Endothelial cell of umbilical vein (primary cell): ENCODE measurements at regions of chr17 and their contacts with region 1.

Region 1: GRCh38 chr17:1365445-1366039 is 34.5 kb downstream of the YWHAE start:
- DNase-seq: peak; percentile 86
- H3K4me3 ChIP-seq: no peak overlapping the region
- H3K27ac ChIP-seq: no peak overlapping the region
- H3K4me1 ChIP-seq: peaks cover 28% of the 10 kb centered on the region
- H3K27me3 ChIP-seq: no peaks in the 10 kb centered on the region
- CTCF ChIP-seq: peak; percentile 72 to 75
- POLR2A ChIP-seq: no peak

Region 2: GRCh38 chr17:1331708-1332107 is 33.8 kb before region 1 on chr17:
- CTCF ChIA-PET with region 1: interaction called, 12 read pairs
- POLR2A ChIA-PET with region 1: no interaction called
- dilution Hi-C with region 1: no loop called
- intact Hi-C with region 1: no loop called
- DNase-seq: no peak
- H3K4me3 ChIP-seq: no peak overlapping the region
- H3K27ac ChIP-seq: no peak overlapping the region
- H3K4me1 ChIP-seq: no peaks in the 10 kb centered on the region
- H3K27me3 ChIP-seq: no peaks in the 10 kb centered on the region
- CTCF ChIP-seq: no peak
- POLR2A ChIP-seq: no peak

Region 3: DNA sequence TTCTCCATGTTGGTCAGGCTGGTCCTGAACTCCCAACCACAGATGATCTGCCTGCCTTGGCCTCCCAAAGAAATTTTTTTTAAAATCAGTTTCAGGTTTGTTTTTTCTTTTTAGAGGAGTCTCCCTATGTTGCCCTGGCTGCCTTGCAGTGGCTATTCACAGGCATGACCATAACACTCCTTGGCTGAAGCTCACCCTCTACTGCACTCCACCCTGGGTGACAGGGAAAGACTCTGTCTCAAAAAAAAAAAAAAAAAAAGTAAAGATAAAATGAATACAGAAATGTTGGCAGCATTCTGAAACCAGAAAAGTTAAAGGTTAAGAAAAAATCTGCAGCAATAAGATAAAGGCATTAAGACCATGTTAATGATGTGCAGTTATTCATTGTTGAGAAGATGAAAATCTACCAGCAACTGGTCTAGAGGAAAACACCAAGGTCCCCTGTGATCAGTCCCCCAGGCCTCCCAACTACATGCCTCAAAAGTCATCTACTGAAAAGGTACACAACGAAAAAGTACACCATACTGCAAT is 19.4 kb after region 1 on chr17:
- CTCF ChIA-PET with region 1: interaction called, 106 read pairs
- POLR2A ChIA-PET with region 1: no interaction called
- dilution Hi-C with region 1: no loop called
- intact Hi-C with region 1: no loop called
- DNase-seq: no peak
- H3K4me3 ChIP-seq: no peak overlapping the region
- H3K27ac ChIP-seq: no peak overlapping the region
- H3K4me1 ChIP-seq: peaks cover 9% of the 10 kb centered on the region
- H3K27me3 ChIP-seq: no peaks in the 10 kb centered on the region
- CTCF ChIP-seq: no peak
- POLR2A ChIP-seq: no peak

Region 4: DNA sequence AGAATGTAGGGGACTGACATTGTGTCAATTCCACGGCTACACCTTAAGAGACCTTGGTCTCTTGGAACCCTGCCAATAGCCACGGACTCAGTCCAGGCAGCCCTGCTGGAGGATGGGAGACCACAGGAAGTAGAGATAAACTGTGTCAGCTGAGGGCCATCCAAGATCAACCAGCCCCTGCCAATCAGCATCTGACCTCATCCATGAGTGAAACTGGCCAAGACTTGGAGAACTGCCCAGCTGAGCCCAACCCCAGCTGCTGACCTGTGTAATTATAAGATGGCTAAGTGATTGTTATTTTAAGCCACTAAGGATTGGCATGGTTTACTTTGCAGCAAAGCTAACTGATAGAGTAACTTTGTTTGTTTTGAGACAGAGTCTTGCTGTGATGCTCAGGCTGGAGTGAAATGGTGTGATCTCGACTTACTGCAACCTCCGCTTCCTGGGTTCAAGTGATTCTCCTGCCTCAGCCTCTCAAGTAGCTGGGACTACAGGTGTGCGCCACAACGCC is 47.8 kb after region 1 on chr17:
- CTCF ChIA-PET with region 1: interaction called, 28 read pairs
- POLR2A ChIA-PET with region 1: interaction called, 6 read pairs
- dilution Hi-C with region 1: no loop called
- intact Hi-C with region 1: no loop called
- DNase-seq: peak; percentile 97
- H3K4me3 ChIP-seq: no peak overlapping the region
- H3K27ac ChIP-seq: no peak overlapping the region
- H3K4me1 ChIP-seq: peaks cover 12% of the 10 kb centered on the region
- H3K27me3 ChIP-seq: no peaks in the 10 kb centered on the region
- CTCF ChIP-seq: no peak
- POLR2A ChIP-seq: no peak

Region 5: DNA sequence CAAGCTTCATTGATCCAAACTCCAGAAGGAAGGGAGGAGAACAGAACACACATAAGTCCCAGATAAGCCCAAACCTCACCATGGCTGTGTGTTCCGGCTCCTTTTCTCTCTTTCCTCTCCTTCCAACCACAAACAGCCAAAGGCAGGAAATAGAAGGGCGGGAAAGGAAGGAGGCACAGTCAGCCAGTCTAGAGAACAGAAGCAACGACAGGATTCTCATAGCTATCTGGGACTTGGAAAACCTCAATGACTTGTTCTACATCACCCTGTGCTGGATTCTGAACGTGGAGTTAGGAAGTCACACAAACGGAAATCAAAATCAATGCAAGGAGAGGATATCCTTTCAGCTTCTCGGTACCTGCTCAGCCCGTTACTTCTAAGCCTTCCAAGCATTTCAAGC is 81.5 kb after region 1 on chr17:
- CTCF ChIA-PET with region 1: interaction called, 21 read pairs
- POLR2A ChIA-PET with region 1: interaction called, 3 read pairs
- dilution Hi-C with region 1: no loop called
- intact Hi-C with region 1: no loop called
- DNase-seq: peak; percentile 82
- H3K4me3 ChIP-seq: peak overlapping the region in 2 of 3 experiments; percentile 21 to 58
- H3K27ac ChIP-seq: peak overlapping the region; percentile 85
- H3K4me1 ChIP-seq: peaks cover 16% of the 10 kb centered on the region
- H3K27me3 ChIP-seq: no peaks in the 10 kb centered on the region
- CTCF ChIP-seq: no peak
- POLR2A ChIP-seq: peak; percentile 56

Region 6: GRCh38 chr17:1488030-1488863 is 122.7 kb after region 1 on chr17:
- CTCF ChIA-PET with region 1: interaction called, 23 read pairs
- POLR2A ChIA-PET with region 1: no interaction called
- dilution Hi-C with region 1: no loop called
- intact Hi-C with region 1: no loop called
- DNase-seq: peak; percentile 80
- H3K4me3 ChIP-seq: peak overlapping the region in 2 of 3 experiments; percentile 15 to 21
- H3K27ac ChIP-seq: peak overlapping the region; percentile 61
- H3K4me1 ChIP-seq: peaks cover 37% of the 10 kb centered on the region
- H3K27me3 ChIP-seq: no peaks in the 10 kb centered on the region
- CTCF ChIP-seq: no peak
- POLR2A ChIP-seq: peak; percentile 60

Region 7: GRCh38 chr17:1516388-1517161 is 151.0 kb after region 1 on chr17 and contains the start of gene INPP5K:
- CTCF ChIA-PET with region 1: interaction called, 128 read pairs
- POLR2A ChIA-PET with region 1: interaction called, 4 read pairs
- dilution Hi-C with region 1: no loop called
- intact Hi-C with region 1: loop called (anchors 1 kb)
- DNase-seq: peak; percentile 98
- H3K4me3 ChIP-seq: peak within 1 kb of the TSS; percentile 77 to 98 (median 89)
- H3K27ac ChIP-seq: peak within 1 kb of the TSS; percentile 75
- H3K4me1 ChIP-seq: peaks cover 23% of the 10 kb centered on the region
- H3K27me3 ChIP-seq: no peaks in the 10 kb centered on the region
- CTCF ChIP-seq: no peak
- POLR2A ChIP-seq: peak; percentile 86
- total RNA-seq, gene INPP5K: 41.3 and 44.2 TPM in 2 replicates